OCI-LY7 (cell line): ENCODE measurements at regions of chr22 and their contacts with region 1.

Region 1: GRCh38 chr22:49767355-49768062 is 60.2 kb downstream of the BRD1 start:
- DNase-seq: peak; percentile 72
- H3K4me3 ChIP-seq: no peak overlapping the region
- H3K27ac ChIP-seq: no peak overlapping the region
- H3K4me1 ChIP-seq: no peaks in the 10 kb centered on the region
- CTCF ChIP-seq: peak; percentile 98

Region 2: GRCh38 chr22:49925525-49926128 is 158.1 kb after region 1 on chr22:
- CTCF ChIA-PET with region 1: no interaction called
- POLR2A ChIA-PET with region 1: interaction called, 3 read pairs
- intact Hi-C with region 1: loop called (anchors 1 kb)
- DNase-seq: peak; percentile 91
- H3K4me3 ChIP-seq: peak overlapping the region; percentile 59
- H3K27ac ChIP-seq: peak overlapping the region; percentile 92
- H3K4me1 ChIP-seq: peaks cover 48% of the 10 kb centered on the region
- CTCF ChIP-seq: no peak